WTC11 (cell line): ENCODE measurements at regions of chr19 and their contacts with region 1.

Region 1: DNA sequence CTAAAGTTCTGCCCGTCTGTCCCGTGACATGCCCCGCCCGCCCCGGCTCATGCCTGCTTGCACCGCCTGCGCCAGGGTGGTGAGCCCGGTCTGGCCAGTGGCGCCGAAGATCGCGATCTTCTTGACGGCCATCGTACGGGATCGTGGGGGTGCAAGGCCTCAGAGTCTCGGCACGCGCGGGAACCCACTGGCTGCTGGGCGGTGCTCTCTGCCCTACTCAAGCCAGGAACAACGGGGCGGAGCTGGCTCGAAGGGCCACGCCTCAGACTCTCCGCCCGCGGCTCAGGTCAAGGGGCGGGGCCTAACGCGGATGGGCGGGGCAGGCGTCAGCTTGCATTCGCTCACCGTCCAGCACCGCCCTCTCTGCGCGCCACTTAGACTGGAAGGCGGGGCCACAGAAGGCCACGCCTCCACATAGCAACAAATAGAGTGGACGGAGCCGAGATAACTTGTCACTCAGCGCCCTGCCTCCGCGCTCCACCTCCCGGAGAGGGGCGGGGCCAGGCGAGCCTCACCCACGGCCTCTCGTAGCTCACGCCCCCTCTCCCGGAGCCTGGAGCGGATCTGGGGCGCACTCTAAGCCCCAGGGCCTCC is at the start of gene BLVRB:
- DNase-seq: peak; percentile 100
- ATAC-seq: peak; percentile 92
- H3K4me3 Mint-ChIP-seq: peak within 1 kb of the TSS; percentile 79
- H3K27ac Mint-ChIP-seq: peak within 1 kb of the TSS; percentile 78
- H3K4me1 Mint-ChIP-seq: peaks cover 16% of the 10 kb centered on the region
- H3K27me3 Mint-ChIP-seq: peaks cover 38% of the 10 kb centered on the region
- CTCF ChIP-seq: no peak
- total RNA-seq, gene BLVRB: 35.1 to 38.5 TPM (median 37.1 TPM) in 3 replicates

Region 2: DNA sequence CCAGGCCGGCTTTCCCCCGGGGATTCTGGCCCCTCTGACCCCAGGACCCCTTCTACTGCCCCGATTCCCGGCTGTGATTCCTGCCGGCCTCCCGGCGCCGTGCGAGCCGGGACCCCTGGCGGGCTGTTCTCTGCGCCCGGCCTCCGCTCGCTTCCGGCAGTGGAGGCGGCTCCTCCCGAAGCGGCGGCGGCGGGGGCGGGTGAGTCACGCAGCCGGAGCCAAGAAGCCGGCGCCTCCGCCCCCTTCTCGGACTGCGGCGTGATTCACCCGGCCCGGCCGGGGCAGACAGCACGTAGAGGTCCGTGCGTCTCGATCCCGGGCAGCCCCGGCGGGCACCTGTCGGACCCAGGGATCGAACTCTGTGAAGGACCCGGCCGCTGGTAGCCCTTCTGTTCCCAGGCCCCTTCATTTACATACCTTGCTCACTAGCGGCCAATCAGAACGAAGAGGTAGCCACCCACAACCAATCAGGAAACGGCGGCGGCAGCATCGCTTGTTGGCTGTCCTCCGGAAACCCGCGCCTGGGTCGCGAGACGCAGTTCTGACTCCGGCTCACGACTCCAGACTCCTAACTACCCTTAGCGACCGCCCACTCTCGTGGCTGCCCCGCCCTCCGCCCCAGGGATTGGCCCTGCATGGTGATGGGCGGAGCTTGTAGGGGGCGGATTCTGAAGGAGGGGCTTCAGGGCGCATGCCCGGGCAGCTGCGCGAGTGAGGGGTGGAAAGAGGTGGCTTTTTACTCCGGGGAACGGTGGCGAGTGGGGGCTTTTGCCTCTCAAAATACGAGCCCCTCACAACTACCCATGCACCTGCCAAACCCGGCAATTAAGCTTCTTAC is 40.0 kb before region 1 on chr19 and contains the start of gene SERTAD1:
- CTCF ChIA-PET with region 1: interaction called, 55 read pairs
- POLR2A ChIA-PET with region 1: interaction called, 4 read pairs
- DNase-seq: peak; percentile 100
- ATAC-seq: peak; percentile 89
- H3K4me3 Mint-ChIP-seq: peak within 1 kb of the TSS; percentile 91
- H3K27ac Mint-ChIP-seq: peak within 1 kb of the TSS; percentile 97
- H3K4me1 Mint-ChIP-seq: peaks cover 16% of the 10 kb centered on the region
- H3K27me3 Mint-ChIP-seq: peaks cover 3% of the 10 kb centered on the region; the same call in 1 of the 2 replicates
- CTCF ChIP-seq: peak; percentile 80
- total RNA-seq, gene SERTAD1: 6.8 to 8.6 TPM (median 7.4 TPM) in 3 replicates

Region 3: GRCh38 chr19:40452016-40452415 is 13.6 kb before region 1 on chr19:
- CTCF ChIA-PET with region 1: interaction called, 57 read pairs
- POLR2A ChIA-PET with region 1: interaction called, 6 read pairs
- DNase-seq: no peak
- ATAC-seq: no peak
- H3K4me3 Mint-ChIP-seq: no peak overlapping the region
- H3K27ac Mint-ChIP-seq: no peak overlapping the region; the same call in none of the 2 replicates
- H3K4me1 Mint-ChIP-seq: peaks cover 5% of the 10 kb centered on the region; the same call in 1 of the 2 replicates
- H3K27me3 Mint-ChIP-seq: no peaks in the 10 kb centered on the region
- CTCF ChIP-seq: no peak

Region 4: DNA sequence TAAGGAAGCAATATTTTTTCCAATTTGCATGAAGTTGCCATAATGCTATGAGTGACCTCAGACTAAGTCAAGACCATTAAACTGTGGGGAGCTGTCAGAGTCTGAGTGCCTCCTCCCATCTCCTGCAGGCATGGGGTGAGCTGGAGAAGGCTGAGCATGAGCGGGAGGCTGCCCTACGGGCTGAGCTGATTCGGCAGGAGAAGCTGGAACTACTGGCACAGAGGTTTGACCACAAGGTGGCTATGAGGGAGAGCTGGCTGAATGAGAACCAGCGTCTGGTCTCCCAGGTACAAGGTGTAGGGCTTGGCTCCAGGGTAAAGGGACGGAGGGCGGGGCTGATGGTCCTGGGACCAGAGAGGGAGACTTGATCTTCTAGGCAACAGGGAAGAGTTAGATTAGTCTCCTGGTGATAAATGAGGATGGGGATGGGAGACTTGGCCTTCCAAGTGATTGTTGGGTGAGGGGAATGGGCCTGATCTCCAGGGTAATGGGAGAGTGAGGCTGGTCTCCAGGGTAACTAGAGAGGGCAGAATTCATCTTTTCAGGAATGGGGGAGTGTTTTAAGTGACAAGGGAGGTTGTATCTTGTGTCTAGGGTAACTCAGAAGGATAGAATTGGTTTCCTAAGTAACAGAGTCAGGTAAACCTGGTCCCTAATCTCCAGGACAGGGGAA is 37.1 kb after region 1 on chr19:
- CTCF ChIA-PET with region 1: interaction called, 10 read pairs
- POLR2A ChIA-PET with region 1: no interaction called
- DNase-seq: peak; percentile 51
- ATAC-seq: peak; percentile 96
- H3K4me3 Mint-ChIP-seq: no peak overlapping the region
- H3K27ac Mint-ChIP-seq: no peak overlapping the region
- H3K4me1 Mint-ChIP-seq: no peaks in the 10 kb centered on the region
- H3K27me3 Mint-ChIP-seq: peaks cover 59% of the 10 kb centered on the region
- CTCF ChIP-seq: no peak

Region 5: GRCh38 chr19:40523322-40524047 is 57.8 kb after region 1 on chr19:
- CTCF ChIA-PET with region 1: interaction called, 32 read pairs
- POLR2A ChIA-PET with region 1: interaction called, 5 read pairs
- DNase-seq: peak; percentile 87
- ATAC-seq: peak; percentile 91
- H3K4me3 Mint-ChIP-seq: no peak overlapping the region
- H3K27ac Mint-ChIP-seq: no peak overlapping the region
- H3K4me1 Mint-ChIP-seq: peaks cover 6% of the 10 kb centered on the region
- H3K27me3 Mint-ChIP-seq: peaks cover 65% of the 10 kb centered on the region
- CTCF ChIP-seq: peak; percentile 75

Region 6: GRCh38 chr19:40549007-40549708 is 83.5 kb after region 1 on chr19:
- CTCF ChIA-PET with region 1: interaction called, 13 read pairs
- POLR2A ChIA-PET with region 1: no interaction called
- DNase-seq: peak; percentile 96
- ATAC-seq: peak; percentile 93
- H3K4me3 Mint-ChIP-seq: peak overlapping the region; percentile 61
- H3K27ac Mint-ChIP-seq: no peak overlapping the region
- H3K4me1 Mint-ChIP-seq: peaks cover 8% of the 10 kb centered on the region
- H3K27me3 Mint-ChIP-seq: peaks cover 78% of the 10 kb centered on the region
- CTCF ChIP-seq: peak; percentile 41; the same call in 1 of the 2 replicates

Region 7: DNA sequence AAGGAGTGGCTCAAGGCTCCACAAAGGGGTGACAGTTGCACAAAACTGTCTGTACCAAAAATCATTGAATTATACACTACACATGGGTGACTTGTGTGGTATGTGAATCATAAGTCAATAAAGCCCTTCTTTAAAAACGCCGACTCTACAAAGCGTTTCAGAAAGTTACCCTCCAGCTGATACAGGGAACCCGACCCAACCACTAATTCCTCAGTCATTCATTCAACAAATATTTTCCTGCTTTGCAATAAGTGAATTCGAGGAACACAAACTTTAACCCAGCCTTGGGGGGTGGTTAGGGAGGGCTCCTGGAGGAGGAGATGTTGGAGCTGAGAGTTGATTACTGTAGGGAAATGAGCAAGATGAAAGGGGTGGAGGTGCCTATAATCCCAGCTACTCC is 167.6 kb after region 1 on chr19:
- CTCF ChIA-PET with region 1: interaction called, 16 read pairs
- POLR2A ChIA-PET with region 1: no interaction called
- DNase-seq: no peak
- ATAC-seq: no peak
- H3K4me3 Mint-ChIP-seq: peak overlapping the region; percentile 32; the same call in 1 of the 2 replicates
- H3K27ac Mint-ChIP-seq: no peak overlapping the region
- H3K4me1 Mint-ChIP-seq: peaks cover 44% of the 10 kb centered on the region
- H3K27me3 Mint-ChIP-seq: peaks cover 51% of the 10 kb centered on the region
- CTCF ChIP-seq: no peak